ENCODE measurements at regions of chr16 and their contacts with region 1.

Region 1: DNA sequence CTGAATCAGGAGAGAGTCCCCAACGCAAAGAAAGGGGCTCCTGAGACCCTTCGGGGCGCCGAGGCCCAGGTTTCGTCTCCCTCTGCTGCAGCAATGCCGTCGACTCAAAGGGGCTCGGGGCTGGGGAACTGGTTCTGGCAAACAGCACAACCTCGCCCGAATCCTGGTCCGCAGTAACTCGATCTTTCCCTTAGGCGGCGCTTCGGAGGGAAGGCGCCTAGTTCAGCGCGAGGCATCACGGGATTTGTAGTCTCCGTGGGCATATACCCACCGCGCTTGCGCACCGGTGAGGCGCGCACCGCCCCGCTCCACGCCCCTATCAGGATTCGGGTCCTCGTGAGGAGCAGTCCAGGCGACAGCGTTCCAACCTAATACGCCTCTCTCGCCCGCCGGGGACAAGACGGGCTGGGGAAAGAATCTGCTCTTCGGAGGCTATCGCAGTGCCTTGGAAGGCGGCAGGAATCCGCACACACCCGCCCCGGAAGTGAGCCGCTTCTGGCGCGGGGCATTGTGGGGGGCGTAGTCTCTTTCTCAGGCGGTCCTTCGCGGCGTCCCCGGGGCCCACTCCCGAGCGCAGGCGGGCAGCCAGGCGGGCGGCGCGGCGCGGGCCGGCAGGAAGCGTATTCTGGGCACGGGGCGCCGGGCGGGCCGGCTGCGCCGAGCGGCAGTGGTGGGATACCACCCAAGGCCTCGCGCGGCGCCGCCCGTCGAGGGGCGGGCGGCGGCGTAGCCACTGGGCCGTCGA is at the start of gene THAP11:
- DNase-seq: peak; percentile 98
- ATAC-seq: peak; percentile 58
- H3K4me3 ChIP-seq: peak within 1 kb of the TSS; percentile 74 to 98 (median 89)
- H3K4me3 Mint-ChIP-seq: peak within 1 kb of the TSS; percentile 96
- H3K27ac ChIP-seq: peak within 1 kb of the TSS; percentile 87 to 96
- H3K27ac Mint-ChIP-seq: peak within 1 kb of the TSS; percentile 98
- H3K4me1 ChIP-seq: peaks cover 31 to 42% of the 10 kb centered on the region in 2 donors
- H3K4me1 Mint-ChIP-seq: peaks cover 36% of the 10 kb centered on the region
- H3K27me3 ChIP-seq: no peaks in the 10 kb centered on the region
- H3K27me3 Mint-ChIP-seq: no peaks in the 10 kb centered on the region
- CTCF ChIP-seq: peak; percentile 83
- total RNA-seq, gene THAP11: 42.7 and 44.0 TPM in 2 replicates

Region 2: DNA sequence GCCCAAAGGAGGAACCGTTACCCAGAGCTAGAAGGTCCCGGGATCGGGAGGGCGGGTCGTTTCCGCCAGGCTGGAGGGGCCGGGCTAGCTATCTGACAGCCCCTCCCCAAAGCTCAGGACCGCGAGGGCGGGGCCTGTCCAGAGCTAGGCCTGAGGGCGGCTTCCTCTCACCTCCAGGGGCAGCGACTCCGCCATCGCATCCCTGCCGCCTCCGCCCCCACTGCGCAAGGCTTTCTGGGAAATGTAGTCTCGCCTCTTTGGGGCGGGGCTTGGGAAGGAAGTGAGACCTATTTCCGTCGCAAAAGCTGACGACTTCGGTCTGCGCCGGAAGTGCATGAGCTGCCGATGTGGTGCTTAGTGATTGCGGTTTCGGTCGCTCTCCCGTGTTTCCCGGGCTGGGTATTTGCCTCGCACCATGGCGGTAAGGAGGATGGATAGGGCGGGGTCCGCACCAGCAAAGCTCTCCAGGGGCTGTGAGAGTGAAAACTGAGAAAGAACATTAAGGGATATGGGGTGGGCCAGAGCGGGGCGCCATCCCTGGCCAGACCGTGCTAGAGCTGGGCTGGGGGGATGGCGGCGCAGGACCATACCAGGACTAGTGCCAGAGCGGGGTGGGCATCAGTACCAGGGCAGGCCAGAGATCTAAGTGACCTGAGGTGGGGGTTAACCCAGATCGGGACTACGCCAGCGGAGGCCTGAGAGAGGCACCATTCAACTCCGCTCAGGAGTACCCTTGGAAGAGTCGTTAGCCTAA is 615.0 kb before region 1 on chr16 and contains the start of gene TMEM208:
- CTCF ChIA-PET with region 1: no interaction called
- POLR2A ChIA-PET with region 1: no interaction called
- intact Hi-C with region 1: loop called (anchors 2 kb)
- DNase-seq: peak; percentile 99
- ATAC-seq: peak; percentile 99
- H3K4me3 ChIP-seq: peak within 1 kb of the TSS; percentile 77 to 99 (median 86)
- H3K4me3 Mint-ChIP-seq: peak within 1 kb of the TSS; percentile 100
- H3K27ac ChIP-seq: peak within 1 kb of the TSS; percentile 52 to 82
- H3K27ac Mint-ChIP-seq: peak within 1 kb of the TSS; percentile 100
- H3K4me1 ChIP-seq: peaks cover 15 to 22% of the 10 kb centered on the region in 2 donors
- H3K4me1 Mint-ChIP-seq: peaks cover 29% of the 10 kb centered on the region
- H3K27me3 ChIP-seq: no peaks in the 10 kb centered on the region
- H3K27me3 Mint-ChIP-seq: no peaks in the 10 kb centered on the region
- CTCF ChIP-seq: peak; percentile 13
- total RNA-seq, gene TMEM208: 36.3 and 40.4 TPM in 2 replicates

Region 3: DNA sequence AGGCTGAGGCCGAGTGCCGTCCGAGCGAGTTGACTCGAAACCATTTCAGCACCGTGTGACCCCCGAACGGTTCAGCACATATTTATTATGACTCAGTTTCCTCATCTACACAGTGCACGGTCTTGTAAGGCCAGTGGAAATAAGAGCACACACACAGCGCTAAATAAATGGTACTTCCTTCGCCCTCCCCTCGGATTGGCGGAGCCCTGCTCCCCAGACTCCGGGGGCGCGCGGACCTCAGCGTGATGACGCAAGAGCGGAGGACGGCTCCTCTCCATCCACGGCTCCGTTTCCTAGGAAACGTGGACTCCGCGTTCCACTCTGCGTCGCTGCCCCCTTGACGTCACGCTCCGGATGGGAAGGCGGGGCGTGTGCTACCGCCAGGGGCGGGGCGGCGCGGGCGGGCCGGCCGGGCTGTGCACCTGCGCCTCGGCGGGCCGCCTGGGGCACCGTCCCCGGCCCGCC is 181.3 kb before region 1 on chr16 and contains the start of gene PARD6A:
- CTCF ChIA-PET with region 1: no interaction called
- POLR2A ChIA-PET with region 1: no interaction called
- intact Hi-C with region 1: loop called (anchors 2 kb)
- DNase-seq: peak; percentile 99
- ATAC-seq: peak; percentile 83
- H3K4me3 ChIP-seq: peak within 1 kb of the TSS; percentile 80 to 99 (median 95)
- H3K4me3 Mint-ChIP-seq: peak within 1 kb of the TSS; percentile 97
- H3K27ac ChIP-seq: peak within 1 kb of the TSS; percentile 88 to 93
- H3K27ac Mint-ChIP-seq: peak within 1 kb of the TSS; percentile 97
- H3K4me1 ChIP-seq: peaks cover 14 to 24% of the 10 kb centered on the region in 2 donors
- H3K4me1 Mint-ChIP-seq: peaks cover 35% of the 10 kb centered on the region
- H3K27me3 ChIP-seq: no peaks in the 10 kb centered on the region
- H3K27me3 Mint-ChIP-seq: no peaks in the 10 kb centered on the region
- CTCF ChIP-seq: no peak
- total RNA-seq, gene PARD6A: 13.6 and 14.8 TPM in 2 replicates

Region 4: GRCh38 chr16:67672739-67673662 is 168.9 kb before region 1 on chr16:
- CTCF ChIA-PET with region 1: interaction called, 12 read pairs
- POLR2A ChIA-PET with region 1: no interaction called
- intact Hi-C with region 1: no loop called
- DNase-seq: peak; percentile 77
- ATAC-seq: peak; percentile 23
- H3K4me3 ChIP-seq: no peak overlapping the region
- H3K4me3 Mint-ChIP-seq: no peak overlapping the region
- H3K27ac ChIP-seq: no peak overlapping the region
- H3K27ac Mint-ChIP-seq: peak overlapping the region; percentile 41
- H3K4me1 ChIP-seq: peaks cover 23 to 37% of the 10 kb centered on the region in 2 donors
- H3K4me1 Mint-ChIP-seq: peaks cover 39% of the 10 kb centered on the region
- H3K27me3 ChIP-seq: no peaks in the 10 kb centered on the region
- H3K27me3 Mint-ChIP-seq: no peaks in the 10 kb centered on the region
- CTCF ChIP-seq: peak; percentile 81

Region 5: GRCh38 chr16:67806428-67807147 is 35.3 kb before region 1 on chr16 and contains the starts of genes RANBP10 and TSNAXIP1:
- CTCF ChIA-PET with region 1: interaction called, 3 read pairs
- POLR2A ChIA-PET with region 1: interaction called, 11 read pairs
- intact Hi-C with region 1: loop called (anchors 1 kb)
- DNase-seq: peak; percentile 98
- ATAC-seq: peak; percentile 89
- H3K4me3 ChIP-seq: peak within 1 kb of the TSS; percentile 89 to 99 (median 92)
- H3K4me3 Mint-ChIP-seq: peak within 1 kb of the TSS; percentile 97
- H3K27ac ChIP-seq: peak within 1 kb of the TSS; percentile 78 to 80
- H3K27ac Mint-ChIP-seq: peak within 1 kb of the TSS; percentile 94
- H3K4me1 ChIP-seq: peaks cover 40 to 51% of the 10 kb centered on the region in 2 donors
- H3K4me1 Mint-ChIP-seq: peaks cover 45% of the 10 kb centered on the region
- H3K27me3 ChIP-seq: no peaks in the 10 kb centered on the region
- H3K27me3 Mint-ChIP-seq: no peaks in the 10 kb centered on the region
- CTCF ChIP-seq: no peak
- total RNA-seq, gene RANBP10: 32.2 and 33.1 TPM in 2 replicates
- total RNA-seq, gene TSNAXIP1: 1.1 and 1.2 TPM in 2 replicates

Region 6: DNA sequence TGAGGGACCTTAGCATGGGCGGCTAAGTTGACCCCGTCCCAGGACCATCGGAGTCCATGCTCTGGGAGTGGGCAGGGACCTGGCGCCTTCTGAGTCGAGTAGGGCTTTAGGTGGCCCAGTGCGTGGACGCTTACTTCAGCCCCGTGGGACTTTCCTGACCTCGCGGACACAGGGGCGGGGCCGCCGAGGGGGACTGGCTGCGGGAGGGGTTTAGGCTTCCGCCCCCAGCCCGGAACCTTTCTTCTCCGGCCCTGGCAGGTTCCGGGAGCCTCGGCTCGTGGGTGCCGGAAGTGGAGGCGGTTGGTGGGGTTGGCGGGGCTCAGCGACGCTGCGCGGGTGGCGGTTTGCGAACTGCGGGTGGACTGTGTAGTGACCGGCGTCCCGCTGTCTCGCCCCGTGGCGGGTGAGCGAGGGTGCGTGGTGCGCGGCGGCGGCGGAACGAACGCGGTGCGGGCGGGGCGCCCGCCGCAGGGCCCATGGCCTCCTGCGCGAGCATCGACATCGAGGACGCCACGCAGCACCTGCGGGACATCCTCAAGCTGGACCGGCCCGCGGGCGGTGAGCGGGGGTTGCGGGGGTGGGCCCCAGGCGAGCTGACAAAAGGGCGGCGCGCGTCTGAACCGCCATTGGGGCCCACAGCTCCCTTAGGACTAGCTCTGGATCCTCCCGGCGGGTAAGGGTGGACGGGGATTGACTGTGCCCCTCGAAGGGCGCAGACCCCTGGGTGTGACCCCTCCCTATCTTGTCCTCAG is 31.0 kb after region 1 on chr16 and contains the start of gene EDC4:
- CTCF ChIA-PET with region 1: interaction called, 4 read pairs
- POLR2A ChIA-PET with region 1: no interaction called
- intact Hi-C with region 1: loop called (anchors 1 kb)
- DNase-seq: peak; percentile 90
- ATAC-seq: peak; percentile 90
- H3K4me3 ChIP-seq: peak within 1 kb of the TSS; percentile 59 to 98 (median 88)
- H3K4me3 Mint-ChIP-seq: peak within 1 kb of the TSS; percentile 91
- H3K27ac ChIP-seq: peak within 1 kb of the TSS; percentile 74 to 81
- H3K27ac Mint-ChIP-seq: peak within 1 kb of the TSS; percentile 90
- H3K4me1 ChIP-seq: peaks cover 23 to 25% of the 10 kb centered on the region in 2 donors
- H3K4me1 Mint-ChIP-seq: peaks cover 37% of the 10 kb centered on the region
- H3K27me3 ChIP-seq: no peaks in the 10 kb centered on the region
- H3K27me3 Mint-ChIP-seq: no peaks in the 10 kb centered on the region
- CTCF ChIP-seq: no peak
- total RNA-seq, gene EDC4: 83.3 and 95.1 TPM in 2 replicates

Region 7: GRCh38 chr16:68085259-68086071 is 243.5 kb after region 1 on chr16 and contains the start of gene NFATC3:
- CTCF ChIA-PET with region 1: interaction called, 4 read pairs
- POLR2A ChIA-PET with region 1: no interaction called
- intact Hi-C with region 1: loop called (anchors 1 kb)
- DNase-seq: peak; percentile 99
- ATAC-seq: peak; percentile 76
- H3K4me3 ChIP-seq: peak within 1 kb of the TSS; percentile 90 to 97 (median 94)
- H3K4me3 Mint-ChIP-seq: peak within 1 kb of the TSS; percentile 86
- H3K27ac ChIP-seq: peak within 1 kb of the TSS; percentile 81 to 93
- H3K27ac Mint-ChIP-seq: peak within 1 kb of the TSS; percentile 96
- H3K4me1 ChIP-seq: peaks cover 57 to 73% of the 10 kb centered on the region in 2 donors
- H3K4me1 Mint-ChIP-seq: peaks cover 68% of the 10 kb centered on the region
- H3K27me3 ChIP-seq: no peaks in the 10 kb centered on the region
- H3K27me3 Mint-ChIP-seq: no peaks in the 10 kb centered on the region
- CTCF ChIP-seq: no peak
- total RNA-seq, gene NFATC3: 115 TPM in 2 replicates

Region 8: GRCh38 chr16:69132424-69133252 is 1290.7 kb after region 1 on chr16 and contains the starts of genes CHTF8 and UTP4:
- CTCF ChIA-PET with region 1: no interaction called
- POLR2A ChIA-PET with region 1: no interaction called
- intact Hi-C with region 1: no loop called
- DNase-seq: peak; percentile 92
- ATAC-seq: peak; percentile 87
- H3K4me3 ChIP-seq: peak within 1 kb of the TSS; percentile 87 to 96 (median 89)
- H3K4me3 Mint-ChIP-seq: peak within 1 kb of the TSS; percentile 95
- H3K27ac ChIP-seq: peak within 1 kb of the TSS; percentile 66 to 90
- H3K27ac Mint-ChIP-seq: peak within 1 kb of the TSS; percentile 91
- H3K4me1 ChIP-seq: peaks cover 16 to 19% of the 10 kb centered on the region in 2 donors
- H3K4me1 Mint-ChIP-seq: peaks cover 41% of the 10 kb centered on the region
- H3K27me3 ChIP-seq: no peaks in the 10 kb centered on the region
- H3K27me3 Mint-ChIP-seq: no peaks in the 10 kb centered on the region
- CTCF ChIP-seq: no peak
- total RNA-seq, gene CHTF8: 112 and 118 TPM in 2 replicates
- total RNA-seq, gene UTP4: 29.4 and 30.1 TPM in 2 replicates

Measured in B cell (primary cell).